Calu3 (cell line): ENCODE measurements at regions of chr4 and their contacts with region 1.

Region 1: GRCh38 chr4:150515135-150515534 is 66.8 kb upstream of the MAB21L2 start:
- DNase-seq: no peak
- H3K4me3 Mint-ChIP-seq: peak overlapping the region; percentile 38
- H3K27ac Mint-ChIP-seq: peak overlapping the region; percentile 93
- H3K4me1 Mint-ChIP-seq: peaks cover 43% of the 10 kb centered on the region
- H3K27me3 Mint-ChIP-seq: no peaks in the 10 kb centered on the region
- CTCF ChIP-seq: no peak

Region 2: DNA sequence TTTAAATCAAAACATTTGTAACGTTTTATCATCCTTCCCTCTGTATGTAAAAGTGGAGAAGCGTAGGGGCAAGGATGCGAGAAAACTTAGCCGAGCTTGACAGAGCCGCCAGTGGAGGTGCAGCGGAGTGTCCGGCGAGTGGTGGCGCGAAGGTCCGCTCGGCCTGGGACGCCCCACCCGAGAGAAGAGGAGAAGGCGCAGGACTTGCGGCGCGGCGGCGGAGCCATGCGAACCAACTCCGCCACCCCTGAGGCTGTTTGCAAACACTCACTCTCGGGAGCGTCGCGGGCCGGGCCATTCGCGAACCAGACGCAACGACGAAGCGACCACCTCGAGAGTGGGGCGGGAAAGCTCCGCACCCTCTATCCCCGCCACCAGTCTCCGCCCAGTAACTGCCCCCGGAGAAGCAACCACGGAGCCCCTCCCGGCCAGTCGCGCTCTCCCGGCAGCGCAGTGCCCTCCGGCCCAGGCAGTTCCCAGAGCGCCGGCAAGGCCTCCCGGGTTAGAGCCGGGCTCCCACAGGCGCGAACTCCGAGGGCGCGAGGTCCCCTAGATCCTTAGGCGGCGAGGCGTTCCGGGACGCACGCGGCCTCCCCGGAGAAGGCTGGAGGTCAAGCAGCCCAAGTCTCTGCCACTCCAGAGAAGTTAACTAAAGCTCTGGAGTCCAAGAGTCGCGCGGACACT is 64.6 kb after region 1 on chr4:
- CTCF ChIA-PET with region 1: no interaction called
- intact Hi-C with region 1: loop called (anchors 2 kb)
- DNase-seq: peak; percentile 24
- H3K4me3 Mint-ChIP-seq: peak overlapping the region; percentile 79
- H3K27ac Mint-ChIP-seq: peak overlapping the region; percentile 88
- H3K4me1 Mint-ChIP-seq: no peaks in the 10 kb centered on the region
- H3K27me3 Mint-ChIP-seq: no peaks in the 10 kb centered on the region
- CTCF ChIP-seq: no peak

Region 3: DNA sequence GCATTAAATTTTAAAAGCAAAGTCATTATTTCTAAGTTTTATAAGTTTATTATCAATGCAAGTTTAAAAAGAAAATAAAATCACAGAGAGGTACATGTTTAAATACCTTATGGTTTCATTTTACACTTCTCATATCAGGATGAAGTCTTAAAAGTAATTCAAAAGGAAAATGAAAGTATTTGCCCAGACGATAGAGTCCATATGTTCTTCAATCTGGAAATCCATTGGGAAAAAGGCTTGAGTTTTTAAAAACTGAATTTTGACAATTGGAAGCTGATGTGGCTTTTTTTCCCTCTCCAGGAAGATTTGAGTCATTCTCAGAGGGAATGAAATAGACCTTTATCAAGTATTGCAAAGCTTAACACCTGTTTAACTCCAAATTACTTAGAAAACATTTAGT is 103.9 kb after region 1 on chr4:
- CTCF ChIA-PET with region 1: no interaction called
- intact Hi-C with region 1: no loop called
- DNase-seq: no peak
- H3K4me3 Mint-ChIP-seq: no peak overlapping the region
- H3K27ac Mint-ChIP-seq: no peak overlapping the region
- H3K4me1 Mint-ChIP-seq: no peaks in the 10 kb centered on the region
- H3K27me3 Mint-ChIP-seq: no peaks in the 10 kb centered on the region
- CTCF ChIP-seq: no peak